ENCODE measurements at regions of chr4 and their contacts with region 1.

Region 1: DNA sequence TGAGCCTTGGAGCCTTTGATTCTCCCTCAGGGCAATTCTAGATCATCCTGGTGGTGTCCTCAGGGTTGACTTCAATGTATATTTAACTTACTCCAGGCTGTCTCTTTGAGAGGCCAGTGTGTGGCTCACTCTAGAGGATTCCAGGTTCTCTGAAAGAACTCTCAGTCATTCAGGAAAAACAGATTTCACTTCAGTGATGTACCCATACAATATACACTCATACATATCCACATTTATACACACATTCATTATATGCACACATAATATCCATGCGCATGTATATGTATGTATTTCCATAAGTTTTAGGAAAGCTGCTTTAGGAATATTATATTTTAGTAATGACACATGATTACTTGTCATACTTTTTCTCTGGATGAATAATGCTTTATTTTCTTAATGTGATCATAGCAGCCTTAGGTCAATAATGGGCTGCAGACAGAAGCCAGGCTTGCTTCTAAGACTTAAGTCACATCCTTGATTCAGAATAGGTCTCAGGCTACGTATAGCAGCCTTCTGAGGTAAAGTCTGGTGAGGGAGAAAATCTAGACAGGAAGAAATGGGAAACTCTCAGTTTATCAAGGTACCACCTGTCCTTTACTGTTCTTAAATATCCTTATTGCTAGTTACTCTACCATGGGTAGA is 397.0 kb downstream of the GPAT3 start:
- DNase-seq: no peak
- H3K4me3 ChIP-seq: no peak overlapping the region
- H3K27ac ChIP-seq: no peak overlapping the region
- H3K4me1 ChIP-seq: no peaks in the 10 kb centered on the region
- H3K27me3 ChIP-seq: no peaks in the 10 kb centered on the region
- CTCF ChIP-seq: no peak
- POLR2A ChIP-seq: no peak

Region 2: DNA sequence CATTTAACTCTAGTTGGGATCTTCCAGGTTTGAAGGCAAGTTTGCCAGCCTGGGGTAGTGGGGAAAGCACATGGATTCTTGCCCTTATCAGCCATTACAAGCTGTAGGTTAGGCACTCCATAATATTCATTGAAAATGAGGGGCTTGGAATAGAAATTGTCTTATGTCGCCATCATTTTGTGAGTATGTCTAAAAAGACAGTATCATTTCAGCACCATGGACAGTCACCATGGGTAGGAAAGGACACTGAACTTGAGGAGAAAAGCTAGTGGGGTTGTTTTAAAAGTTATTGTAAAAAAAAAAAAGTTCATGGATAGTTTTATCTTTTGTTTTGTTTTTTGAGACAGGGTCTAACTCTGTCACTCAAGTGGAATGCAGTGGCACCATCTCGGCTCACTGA is 1915.2 kb before region 1 on chr4:
- intact Hi-C with region 1: loop called (anchors 10 kb)
- DNase-seq: no peak
- H3K4me3 ChIP-seq: no peak overlapping the region
- H3K27ac ChIP-seq: no peak overlapping the region
- H3K4me1 ChIP-seq: no peaks in the 10 kb centered on the region
- H3K27me3 ChIP-seq: no peaks in the 10 kb centered on the region
- CTCF ChIP-seq: no peak
- POLR2A ChIP-seq: no peak